Aorta (tissue), 5 donors: ENCODE measurements at regions of chr1 and their contacts with region 1.

Region 1: DNA sequence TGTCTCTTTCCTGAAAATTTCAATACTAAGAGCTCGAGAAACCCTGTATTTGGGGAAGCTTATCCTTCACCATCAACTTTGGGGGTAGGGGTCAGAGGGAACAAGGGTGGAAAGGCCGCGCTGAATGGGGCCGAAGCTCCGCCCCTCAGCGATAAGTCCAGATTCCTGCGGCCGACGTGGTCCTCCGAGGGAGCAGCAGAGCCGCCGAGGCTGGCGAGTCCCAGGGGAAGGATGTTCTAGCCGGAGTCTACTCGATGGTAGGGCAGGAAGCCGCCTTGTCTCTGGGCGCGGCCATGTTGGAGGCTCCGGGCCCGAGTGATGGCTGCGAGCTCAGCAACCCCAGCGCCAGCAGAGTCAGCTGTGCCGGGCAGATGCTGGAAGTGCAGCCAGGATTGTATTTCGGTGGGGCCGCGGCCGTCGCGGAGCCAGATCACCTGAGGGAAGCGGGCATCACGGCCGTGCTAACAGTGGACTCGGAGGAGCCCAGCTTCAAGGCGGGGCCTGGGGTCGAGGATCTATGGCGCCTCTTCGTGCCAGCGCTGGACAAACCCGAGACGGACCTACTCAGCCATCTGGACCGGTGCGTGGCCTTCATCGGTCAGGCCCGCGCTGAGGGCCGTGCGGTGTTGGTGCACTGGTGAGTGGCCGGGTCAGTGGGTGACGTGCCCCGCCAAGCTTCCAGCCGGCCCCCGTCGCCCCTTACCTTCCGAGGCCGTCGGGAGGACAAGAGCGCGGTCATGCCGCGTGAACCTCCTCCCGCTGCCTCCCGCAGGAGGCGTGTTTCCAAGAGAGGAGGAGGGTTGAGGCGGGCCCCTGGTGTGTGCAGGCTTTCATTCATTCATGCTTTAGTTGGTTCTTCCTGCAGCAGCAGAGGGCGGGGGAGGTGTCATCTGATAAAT is at the start of gene DUSP12:
- DNase-seq: peak; percentile 97 to 98
- ATAC-seq: peak; percentile 100
- H3K4me3 ChIP-seq: peak within 1 kb of the TSS; percentile 24 to 59
- H3K27ac ChIP-seq: peak within 1 kb of the TSS in 1 of 2 donors; percentile 53
- H3K4me1 ChIP-seq: peaks cover 0 to 6% of the 10 kb centered on the region in 2 donors
- H3K27me3 ChIP-seq: no peaks in the 10 kb centered on the region
- total RNA-seq, gene DUSP12: 19.3 to 22.1 TPM

Region 2: GRCh38 chr1:161399257-161399998 is 350.3 kb before region 1 on chr1:
- intact Hi-C with region 1: loop called in 1 of 2 experiments (anchors 10 kb)
- DNase-seq: peak; percentile 91 to 94
- ATAC-seq: peak; percentile 97
- H3K4me3 ChIP-seq: peak overlapping the region; percentile 69 to 82
- H3K27ac ChIP-seq: peak overlapping the region; percentile 96 to 98
- H3K4me1 ChIP-seq: no peaks in the 10 kb centered on the region
- H3K27me3 ChIP-seq: no peaks in the 10 kb centered on the region

Region 3: GRCh38 chr1:161486806-161487741 is 262.7 kb before region 1 on chr1:
- intact Hi-C with region 1: loop called (anchors 5 to 10 kb)
- DNase-seq: peak; percentile 76 to 80
- ATAC-seq: peak; percentile 88
- H3K4me3 ChIP-seq: no peak overlapping the region
- H3K27ac ChIP-seq: no peak overlapping the region
- H3K4me1 ChIP-seq: no peaks in the 10 kb centered on the region
- H3K27me3 ChIP-seq: no peaks in the 10 kb centered on the region